Activated naive CD8-positive, alpha-beta T cell treated with anti-CD3 and anti-CD28 coated beads, Interleukin-2, amount 10 ng/mL, durations not matched to agents 7 days and 5 days (primary cell): ENCODE measurements at regions of chr1 and their contacts with region 1.

Region 1: GRCh38 chr1:97920832-97921571 is at the start of gene DPYD:
- DNase-seq: peak; percentile 93
- ATAC-seq: peak; percentile 87
- H3K4me3 Mint-ChIP-seq: peak within 1 kb of the TSS; percentile 93
- H3K27ac Mint-ChIP-seq: peak within 1 kb of the TSS; percentile 97
- H3K4me1 Mint-ChIP-seq: peaks cover 36% of the 10 kb centered on the region
- H3K27me3 Mint-ChIP-seq: no peaks in the 10 kb centered on the region
- total RNA-seq, gene DPYD: 42.0 to 42.3 TPM

Region 2: DNA sequence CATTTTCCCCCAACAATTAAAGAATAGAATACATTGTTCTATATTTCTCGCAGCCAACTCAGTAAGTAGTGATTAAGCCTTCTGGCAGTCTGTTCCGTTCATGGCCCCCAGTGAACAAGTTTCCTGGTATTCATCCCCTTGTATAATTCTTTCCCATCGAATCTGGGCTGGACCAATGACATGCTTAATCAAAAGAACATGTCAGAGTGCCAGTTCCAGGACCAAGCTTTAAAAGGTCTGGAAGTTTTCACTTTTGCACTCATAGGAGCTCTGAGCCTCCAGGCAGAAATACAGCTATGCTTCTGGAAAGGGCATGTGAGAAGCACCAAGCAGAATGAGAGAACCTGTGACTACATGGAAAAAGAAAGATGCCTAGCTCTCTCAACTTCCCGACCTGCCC is 22.4 kb after region 1 on chr1:
- POLR2A ChIA-PET with region 1: interaction called, 22 read pairs
- DNase-seq: no peak
- ATAC-seq: no peak
- H3K4me3 Mint-ChIP-seq: peak overlapping the region; percentile 29
- H3K27ac Mint-ChIP-seq: peak overlapping the region; percentile 18
- H3K4me1 Mint-ChIP-seq: peaks cover 29% of the 10 kb centered on the region
- H3K27me3 Mint-ChIP-seq: peaks cover 2% of the 10 kb centered on the region